A549 (cell line): ENCODE measurements at regions of chr15 and their contacts with region 1.

Region 1: DNA sequence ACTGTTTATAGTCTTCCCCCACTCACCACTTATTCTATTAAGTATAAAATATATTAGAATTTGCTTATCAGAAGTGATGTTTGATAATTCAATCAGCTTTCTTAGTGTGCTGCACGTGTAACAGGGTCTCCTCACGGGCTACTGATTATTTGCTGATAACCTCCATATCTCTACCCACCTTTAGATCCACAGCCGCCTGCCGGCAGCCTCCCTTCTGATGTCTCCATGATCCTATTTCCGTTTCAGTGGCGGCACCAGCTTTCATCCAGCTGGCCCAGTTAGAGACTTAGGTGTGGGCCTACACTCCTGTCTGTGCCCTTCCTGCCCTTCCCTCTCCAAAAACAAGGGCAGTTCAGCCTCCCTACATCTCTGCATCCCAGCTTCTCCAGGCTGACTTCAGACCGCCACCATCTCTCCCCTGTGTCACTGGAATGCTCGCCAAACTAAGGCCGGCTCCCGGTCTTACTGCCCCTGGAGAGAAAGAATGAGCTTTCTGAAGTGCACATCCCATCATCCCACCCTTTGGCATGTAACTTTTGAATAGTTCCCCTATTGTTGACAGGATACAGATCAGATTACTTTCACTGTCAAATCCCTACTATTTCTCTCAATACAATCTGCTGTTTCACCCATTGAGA is 76.6 kb upstream of the PRTG start:
- DNase-seq: no peak
- ATAC-seq: peak; percentile 11 to 17; a peak in 1 of 6 replicates
- H3K4me3 ChIP-seq: no peak overlapping the region
- H3K27ac ChIP-seq: no peak overlapping the region
- H3K4me1 ChIP-seq: peaks cover 6% of the 10 kb centered on the region; the same call in 1 of the 3 replicates
- CTCF ChIP-seq: no peak
- EP300 ChIP-seq: no peak
- POLR2A ChIP-seq: no peak
- RAD21 ChIP-seq: no peak

Region 2: DNA sequence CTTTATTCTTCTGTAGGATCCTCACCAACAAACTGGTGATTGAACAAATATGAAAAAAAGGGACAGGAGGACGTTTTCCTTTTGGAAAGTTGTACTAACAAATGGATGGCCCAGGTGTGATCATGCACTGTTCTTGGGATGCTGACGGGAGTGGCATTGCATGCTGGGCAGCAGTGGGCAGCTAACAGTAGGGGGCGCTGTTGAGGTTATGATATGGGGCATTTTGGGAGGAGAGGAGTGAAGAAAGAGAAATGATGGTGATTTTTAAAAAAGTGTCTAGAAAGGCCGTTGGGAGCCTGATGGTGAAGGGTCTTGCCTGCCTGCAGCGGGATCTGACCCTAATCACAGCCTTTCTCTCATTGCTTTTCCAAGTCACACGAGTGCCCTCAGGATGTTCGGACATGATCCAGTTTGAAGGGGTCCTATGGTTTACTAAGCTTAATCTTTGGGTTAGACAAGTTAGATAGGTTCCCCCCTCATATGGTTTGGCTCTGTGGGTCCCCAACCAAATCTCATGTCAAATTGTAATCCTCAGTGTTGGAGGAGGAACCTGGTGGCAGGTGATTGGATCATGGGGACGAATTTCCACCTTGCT is 30.4 kb before region 1 on chr15:
- CTCF ChIA-PET with region 1: interaction called, 10 read pairs
- POLR2A ChIA-PET with region 1: no interaction called
- DNase-seq: peak in 1 of 2 experiments; percentile 56
- ATAC-seq: peak; percentile 62 to 75; a peak in 5 of 6 replicates
- H3K4me3 ChIP-seq: no peak overlapping the region
- H3K27ac ChIP-seq: no peak overlapping the region
- H3K4me1 ChIP-seq: peaks cover 6% of the 10 kb centered on the region; the same call in 2 of the 3 replicates
- CTCF ChIP-seq: peak; percentile 61
- EP300 ChIP-seq: no peak
- POLR2A ChIP-seq: no peak
- RAD21 ChIP-seq: peak; percentile 37 to 50; a peak in 4 of 5 replicates

Region 3: DNA sequence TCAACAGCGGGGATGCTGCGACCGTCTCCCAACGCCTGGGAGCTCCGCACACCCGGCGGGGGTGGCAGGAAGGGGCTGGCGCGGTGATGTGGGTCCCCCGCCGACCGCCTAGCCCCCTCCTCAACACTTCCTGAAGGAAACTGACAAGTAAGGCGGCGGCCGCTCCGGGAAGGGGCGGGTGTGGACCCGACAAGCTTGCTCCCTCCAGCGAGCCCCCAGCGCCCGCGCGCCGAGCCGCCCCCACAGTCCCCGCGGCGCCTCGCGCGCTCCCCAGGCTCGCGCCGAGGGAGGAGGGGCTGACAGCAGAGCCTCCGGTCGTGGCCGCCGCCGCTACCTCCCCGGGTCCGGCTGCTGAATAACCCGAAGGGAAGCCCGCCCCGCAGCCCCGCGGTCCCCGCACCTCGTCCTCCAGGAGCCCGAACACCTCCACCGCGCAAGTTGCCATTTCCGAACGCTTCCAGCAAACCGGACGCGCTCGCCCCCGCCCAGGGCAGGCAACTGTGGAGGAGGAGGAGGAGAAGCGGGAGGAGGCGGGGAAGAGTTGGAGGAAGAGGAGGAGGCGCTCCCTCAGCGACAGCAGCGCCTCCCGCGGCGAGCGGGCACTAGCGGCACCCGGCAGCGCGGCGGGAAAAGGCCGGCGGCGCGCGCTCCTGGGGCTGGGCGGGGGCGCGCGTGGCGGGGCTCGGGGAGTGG is 173.7 kb after region 1 on chr15 and contains the start of gene NEDD4:
- CTCF ChIA-PET with region 1: no interaction called
- POLR2A ChIA-PET with region 1: no interaction called
- DNase-seq: peak; percentile 85 to 88
- ATAC-seq: peak; percentile 92 to 94
- H3K4me3 ChIP-seq: peak within 1 kb of the TSS; percentile 73
- H3K27ac ChIP-seq: peak within 1 kb of the TSS; percentile 92 to 94
- H3K4me1 ChIP-seq: peaks cover 30% of the 10 kb centered on the region
- CTCF ChIP-seq: peak; percentile 59
- EP300 ChIP-seq: no peak
- POLR2A ChIP-seq: peak; percentile 55; the same call in 1 of the 2 replicates
- RAD21 ChIP-seq: peak in 1 of 2 experiments; percentile 58; a peak in 2 of 5 replicates
- polyA plus RNA-seq, gene NEDD4: 62.9 and 78.8 TPM in 2 replicates

Region 4: DNA sequence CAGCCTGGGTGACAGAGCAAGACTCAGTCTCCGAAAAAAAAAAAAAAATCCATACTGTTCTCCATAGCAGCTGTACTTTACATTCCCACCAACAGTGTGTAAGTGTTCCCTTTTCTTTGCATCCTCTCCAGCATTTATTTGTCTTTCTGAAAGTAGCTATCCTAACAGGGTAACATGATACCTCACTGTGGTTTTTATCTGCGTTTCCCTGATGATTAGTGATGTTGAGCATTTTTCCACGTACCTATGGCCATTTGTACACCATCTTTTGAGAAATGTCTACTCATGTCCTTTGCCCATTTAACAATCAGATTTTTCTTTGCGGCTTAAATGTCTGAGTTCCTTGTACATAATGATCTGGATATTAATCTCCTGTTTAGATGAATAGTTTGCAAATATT is 304.9 kb after region 1 on chr15:
- CTCF ChIA-PET with region 1: no interaction called
- POLR2A ChIA-PET with region 1: no interaction called
- DNase-seq: no peak
- ATAC-seq: no peak
- H3K4me3 ChIP-seq: no peak overlapping the region
- H3K27ac ChIP-seq: no peak overlapping the region
- H3K4me1 ChIP-seq: no peaks in the 10 kb centered on the region
- CTCF ChIP-seq: no peak
- EP300 ChIP-seq: no peak
- POLR2A ChIP-seq: no peak
- RAD21 ChIP-seq: no peak